GM12878 (cell line): ENCODE measurements at regions of chr5 and their contacts with region 1.

Region 1: GRCh38 chr5:10695055-10695649 is 65.9 kb downstream of the DAP start:
- DNase-seq: no peak
- ATAC-seq: peak; percentile 63
- H3K4me3 ChIP-seq: no peak overlapping the region
- H3K27ac ChIP-seq: no peak overlapping the region
- H3K4me1 ChIP-seq: peaks cover 19% of the 10 kb centered on the region
- H3K27me3 ChIP-seq: no peaks in the 10 kb centered on the region
- CTCF ChIP-seq: peak; percentile 50 to 81 (median 54); a peak in 5 of 6 replicates
- EP300 ChIP-seq: no peak
- POLR2A ChIP-seq: no peak
- RAD21 ChIP-seq: peak; percentile 71

Region 2: DNA sequence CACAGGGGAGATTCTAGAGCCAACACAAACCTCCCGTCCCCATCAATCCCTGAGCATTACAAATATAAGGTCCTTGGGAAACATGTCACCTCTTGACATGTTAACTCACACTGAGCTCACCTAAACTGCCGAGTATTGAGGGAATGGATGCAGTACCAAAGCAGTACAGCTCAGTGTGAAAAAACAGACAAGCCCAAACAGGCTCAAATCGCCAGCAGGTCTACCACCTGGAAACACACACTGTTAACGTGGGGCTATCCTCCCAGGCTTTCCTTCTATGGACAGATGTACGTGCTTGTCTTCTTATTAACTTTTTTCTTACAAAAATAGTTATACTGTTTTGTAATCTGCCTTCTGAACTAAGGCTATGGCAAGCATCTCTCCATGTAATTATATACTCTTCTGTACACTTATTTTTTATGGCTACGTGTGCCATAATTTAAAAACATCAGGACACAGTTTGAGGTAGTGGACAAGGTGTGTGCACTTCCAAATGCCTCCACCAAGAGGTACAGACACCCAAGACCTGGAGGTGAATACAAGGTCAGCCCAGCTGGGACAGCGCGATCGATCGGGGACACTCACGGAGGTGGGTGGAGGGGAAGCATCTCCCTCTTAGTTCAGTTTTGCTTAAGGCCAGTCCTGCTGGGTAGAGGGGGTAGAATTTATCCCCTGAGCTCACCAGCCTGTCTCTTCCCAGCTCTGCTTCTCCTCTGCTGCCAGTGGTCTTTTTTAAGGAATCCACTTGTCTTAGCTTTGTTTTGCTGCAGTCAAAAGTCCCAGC is 10.7 kb before region 1 on chr5:
- CTCF ChIA-PET with region 1: interaction called, 16 read pairs
- POLR2A ChIA-PET with region 1: no interaction called
- RAD21 ChIA-PET with region 1: interaction called, 4 read pairs
- SMC1A ChIA-PET with region 1: interaction called, 13 read pairs
- in situ Hi-C with region 1: no loop called
- intact Hi-C with region 1: no loop called
- DNase-seq: no peak
- ATAC-seq: peak; percentile 76
- H3K4me3 ChIP-seq: 0 out of 2 replicates have a peak overlapping the region, but pooled peaks have one; percentile 17
- H3K27ac ChIP-seq: peak overlapping the region; percentile 88
- H3K4me1 ChIP-seq: peaks cover 23% of the 10 kb centered on the region
- H3K27me3 ChIP-seq: no peaks in the 10 kb centered on the region
- CTCF ChIP-seq: no peak
- EP300 ChIP-seq: no peak
- POLR2A ChIP-seq: no peak
- RAD21 ChIP-seq: no peak

Region 3: DNA sequence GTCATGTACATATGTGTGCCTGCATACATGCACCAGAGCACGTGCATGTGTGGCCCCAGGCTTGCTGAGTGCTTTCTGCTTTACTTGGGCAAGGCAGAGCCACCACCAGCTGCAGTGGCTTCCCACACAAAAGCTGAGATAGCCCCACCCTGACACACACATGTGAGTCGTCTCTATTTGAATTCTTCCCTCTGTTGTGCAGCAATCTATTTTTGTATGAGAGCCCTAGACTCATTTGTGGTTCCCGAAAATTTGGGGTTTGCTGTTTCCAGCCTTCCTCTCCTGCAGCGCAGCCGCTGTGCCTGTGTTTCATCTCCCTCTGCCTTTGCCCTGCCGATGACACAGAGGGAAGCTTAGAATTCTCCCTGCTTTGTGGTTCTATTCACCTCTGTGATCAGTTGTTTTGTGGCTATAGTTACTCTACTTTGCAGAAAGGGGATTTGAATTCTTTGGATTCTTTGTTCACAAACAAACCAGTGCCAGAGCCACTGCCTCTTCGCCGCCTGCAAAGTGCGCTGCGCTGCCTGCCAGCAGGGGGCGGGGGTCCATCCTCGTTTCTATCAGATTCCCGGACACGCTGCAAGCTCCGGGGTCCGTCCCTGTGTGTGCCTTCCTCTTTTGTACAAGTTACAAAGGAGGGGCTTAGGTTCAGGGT is 161.7 kb after region 1 on chr5:
- CTCF ChIA-PET with region 1: interaction called, 3 read pairs
- POLR2A ChIA-PET with region 1: no interaction called
- RAD21 ChIA-PET with region 1: no interaction called
- SMC1A ChIA-PET with region 1: interaction called, 3 read pairs
- in situ Hi-C with region 1: loop called (anchors 10 kb)
- intact Hi-C with region 1: loop called (anchors 5 kb)
- DNase-seq: no peak
- ATAC-seq: peak; percentile 68
- H3K4me3 ChIP-seq: no peak overlapping the region
- H3K27ac ChIP-seq: no peak overlapping the region
- H3K4me1 ChIP-seq: no peaks in the 10 kb centered on the region
- H3K27me3 ChIP-seq: peaks cover 4 to 6% of the 10 kb centered on the region in 2 experiments; a peak in 3 of 4 replicates
- CTCF ChIP-seq: peak; percentile 52 to 81 (median 78)
- EP300 ChIP-seq: no peak
- POLR2A ChIP-seq: no peak
- RAD21 ChIP-seq: 0 out of 2 replicates have a peak, but pooled peaks have one; percentile 22

Region 4: DNA sequence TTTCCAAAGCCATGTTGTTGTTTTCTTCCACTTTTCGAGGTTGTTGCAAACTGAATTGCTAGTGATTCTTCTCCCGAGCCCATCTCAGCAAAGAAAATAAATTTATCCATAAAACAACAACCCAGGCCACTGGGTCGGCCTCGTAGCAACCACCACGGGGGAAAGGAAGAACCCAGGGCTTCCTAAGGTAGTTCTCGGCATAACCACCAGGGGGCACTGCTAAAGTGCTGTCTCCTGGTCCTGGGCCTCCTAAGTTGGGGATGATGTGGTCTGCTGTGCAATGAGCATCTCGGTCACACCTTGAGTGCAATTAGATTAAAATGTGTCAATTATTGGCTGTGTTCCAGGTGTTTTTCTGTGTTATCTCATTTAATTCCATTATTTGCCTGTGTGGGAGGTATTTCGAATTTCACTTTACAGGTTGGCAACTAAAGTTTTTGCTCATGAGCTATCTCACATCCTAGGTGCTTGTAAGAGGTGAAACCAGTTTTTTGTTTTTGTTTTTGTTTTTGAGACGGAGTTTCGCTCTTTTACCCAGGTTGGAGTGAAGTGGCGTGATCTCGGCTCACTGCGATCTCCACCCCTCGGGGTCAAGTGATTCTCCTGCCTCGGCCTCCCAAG is 168.7 kb after region 1 on chr5:
- CTCF ChIA-PET with region 1: interaction called, 3 read pairs
- POLR2A ChIA-PET with region 1: no interaction called
- RAD21 ChIA-PET with region 1: no interaction called
- SMC1A ChIA-PET with region 1: interaction called, 3 read pairs
- in situ Hi-C with region 1: loop called (anchors 10 kb)
- intact Hi-C with region 1: loop called (anchors 5 kb)
- DNase-seq: peak; percentile 8
- ATAC-seq: peak; percentile 98
- H3K4me3 ChIP-seq: no peak overlapping the region
- H3K27ac ChIP-seq: no peak overlapping the region
- H3K4me1 ChIP-seq: no peaks in the 10 kb centered on the region
- H3K27me3 ChIP-seq: peaks cover under 1 to 1% of the 10 kb centered on the region in 2 experiments; a peak in 1 of 4 replicates
- CTCF ChIP-seq: peak; percentile 75 to 93 (median 91)
- EP300 ChIP-seq: no peak
- POLR2A ChIP-seq: no peak
- RAD21 ChIP-seq: peak; percentile 66

Region 5: DNA sequence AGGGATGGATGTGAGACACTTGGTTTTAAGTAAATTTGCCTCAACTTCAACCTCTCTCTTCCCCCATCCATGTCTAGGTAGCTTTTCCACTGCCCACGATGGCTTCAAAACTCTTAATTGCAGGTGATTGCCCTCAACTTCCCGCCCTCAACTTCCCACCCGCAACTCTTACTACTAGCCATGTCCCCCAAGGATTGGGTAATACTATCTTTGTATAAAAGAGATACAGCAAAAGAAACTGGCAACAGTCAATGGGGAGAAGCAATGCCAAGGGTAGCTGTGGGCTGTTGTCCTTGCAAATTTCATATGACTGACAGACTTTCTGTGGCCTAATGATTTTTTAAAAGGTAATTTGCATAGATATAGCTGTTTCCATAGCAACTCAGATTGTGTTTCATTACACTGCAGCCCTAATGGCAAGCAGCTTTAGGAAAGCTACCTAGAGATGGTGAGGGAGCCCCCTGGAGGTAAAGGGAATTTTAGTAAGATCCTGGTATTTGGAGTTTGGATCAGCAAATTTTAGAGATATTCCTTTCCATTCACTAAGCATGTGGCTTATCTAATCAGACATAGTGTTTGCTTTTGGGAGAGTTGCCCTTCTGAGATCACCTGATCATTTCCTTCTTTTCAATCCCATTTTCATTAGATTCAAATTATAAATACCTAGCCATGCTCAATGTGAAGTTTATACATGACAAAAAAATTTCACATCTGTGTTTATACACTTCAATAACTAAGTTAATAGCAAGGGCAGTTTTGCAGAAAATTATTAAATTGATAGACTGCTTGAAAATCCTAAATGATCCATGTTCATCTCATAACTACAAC is 487.5 kb after region 1 on chr5:
- CTCF ChIA-PET with region 1: no interaction called
- POLR2A ChIA-PET with region 1: no interaction called
- RAD21 ChIA-PET with region 1: interaction called, 3 read pairs
- SMC1A ChIA-PET with region 1: no interaction called
- in situ Hi-C with region 1: no loop called
- intact Hi-C with region 1: loop called (anchors 10 kb)
- DNase-seq: no peak
- ATAC-seq: peak; percentile 54
- H3K4me3 ChIP-seq: no peak overlapping the region
- H3K27ac ChIP-seq: no peak overlapping the region
- H3K4me1 ChIP-seq: no peaks in the 10 kb centered on the region
- H3K27me3 ChIP-seq: no peaks in the 10 kb centered on the region
- CTCF ChIP-seq: peak; percentile 30 to 49 (median 38); a peak in 4 of 6 replicates
- EP300 ChIP-seq: no peak
- POLR2A ChIP-seq: no peak
- RAD21 ChIP-seq: peak; percentile 55